Caco-2 (cell line): ENCODE measurements at regions of chr1 and their contacts with region 1.

Region 1: GRCh38 chr1:155437405-155437804 is 116.7 kb downstream of the RUSC1 start:
- DNase-seq: no peak
- H3K4me3 ChIP-seq: no peak overlapping the region
- H3K4me3 Mint-ChIP-seq: no peak overlapping the region
- H3K27ac Mint-ChIP-seq: no peak overlapping the region
- H3K4me1 ChIP-seq: peaks cover 6% of the 10 kb centered on the region; the same call in 1 of the 2 replicates
- H3K4me1 Mint-ChIP-seq: peaks cover 10% of the 10 kb centered on the region
- H3K27me3 ChIP-seq: no peaks in the 10 kb centered on the region
- H3K27me3 Mint-ChIP-seq: no peaks in the 10 kb centered on the region
- CTCF ChIP-seq: no peak

Region 2: GRCh38 chr1:155504207-155504606 is 66.8 kb after region 1 on chr1:
- CTCF ChIA-PET with region 1: interaction called, 10 read pairs
- POLR2A ChIA-PET with region 1: no interaction called
- intact Hi-C with region 1: no loop called
- DNase-seq: peak in 1 of 2 experiments; percentile 16
- H3K4me3 ChIP-seq: no peak overlapping the region
- H3K4me3 Mint-ChIP-seq: no peak overlapping the region
- H3K27ac Mint-ChIP-seq: no peak overlapping the region
- H3K4me1 ChIP-seq: 0 out of 2 replicates have a peak, but pooled peaks cover 4% of the 10 kb centered on the region
- H3K4me1 Mint-ChIP-seq: peaks cover 7% of the 10 kb centered on the region
- H3K27me3 ChIP-seq: no peaks in the 10 kb centered on the region
- H3K27me3 Mint-ChIP-seq: no peaks in the 10 kb centered on the region
- CTCF ChIP-seq: peak in 1 of 2 experiments; percentile 33

Region 3: GRCh38 chr1:155671760-155672159 is 234.4 kb after region 1 on chr1:
- CTCF ChIA-PET with region 1: no interaction called
- POLR2A ChIA-PET with region 1: interaction called, 10 read pairs
- intact Hi-C with region 1: no loop called
- DNase-seq: no peak
- H3K4me3 ChIP-seq: no peak overlapping the region
- H3K4me3 Mint-ChIP-seq: no peak overlapping the region
- H3K27ac Mint-ChIP-seq: no peak overlapping the region
- H3K4me1 ChIP-seq: no peaks in the 10 kb centered on the region
- H3K4me1 Mint-ChIP-seq: no peaks in the 10 kb centered on the region
- H3K27me3 ChIP-seq: no peaks in the 10 kb centered on the region
- H3K27me3 Mint-ChIP-seq: no peaks in the 10 kb centered on the region
- CTCF ChIP-seq: no peak